ENCODE measurements at regions of chr6 and their contacts with region 1.

Region 1: GRCh38 chr6:144362042-144363018 is 77.2 kb downstream of the UTRN start:
- DNase-seq: peak in 1 of 3 donors; percentile 26
- H3K4me3 ChIP-seq: no peak overlapping the region
- H3K4me3 Mint-ChIP-seq: no peak overlapping the region
- H3K27ac ChIP-seq: peak overlapping the region; percentile 7 to 50
- H3K27ac Mint-ChIP-seq: peak overlapping the region; percentile 57 to 85 (median 70)
- H3K4me1 ChIP-seq: peaks cover 34 to 39% of the 10 kb centered on the region in 2 donors
- H3K4me1 Mint-ChIP-seq: peaks cover 65% of the 10 kb centered on the region
- H3K27me3 ChIP-seq: no peaks in the 10 kb centered on the region
- H3K27me3 Mint-ChIP-seq: no peaks in the 10 kb centered on the region
- CTCF ChIP-seq: no peak

Region 2: DNA sequence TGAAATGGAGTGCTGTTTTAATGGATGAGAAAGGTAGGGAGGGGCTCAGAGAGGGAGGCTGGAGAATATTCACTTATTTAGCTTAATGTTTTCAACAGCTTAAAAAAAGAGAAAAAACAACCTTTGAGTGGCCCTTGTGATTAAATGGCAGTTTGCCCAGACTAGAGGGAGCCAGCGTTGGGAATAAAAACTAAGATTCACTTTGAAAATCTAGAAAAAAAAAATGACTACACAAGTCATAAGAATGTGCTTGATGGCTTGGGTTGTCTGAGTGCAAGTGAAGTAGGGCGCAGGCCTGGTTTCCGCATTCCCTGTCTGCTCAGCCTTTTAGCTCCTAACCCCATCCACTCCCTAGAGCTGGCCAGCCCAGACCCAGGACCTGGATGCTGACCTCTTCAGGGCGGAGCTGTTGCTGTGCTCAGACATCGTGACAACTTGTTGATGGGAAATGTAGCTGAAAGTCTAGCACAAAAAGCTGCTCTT is 48.3 kb before region 1 on chr6:
- intact Hi-C with region 1: loop called in 1 of 2 experiments (anchors 10 kb)
- DNase-seq: no peak
- H3K4me3 ChIP-seq: no peak overlapping the region
- H3K4me3 Mint-ChIP-seq: no peak overlapping the region
- H3K27ac ChIP-seq: no peak overlapping the region
- H3K27ac Mint-ChIP-seq: no peak overlapping the region
- H3K4me1 ChIP-seq: peaks cover 4 to 21% of the 10 kb centered on the region in 2 donors
- H3K4me1 Mint-ChIP-seq: peaks cover 27% of the 10 kb centered on the region
- H3K27me3 ChIP-seq: no peaks in the 10 kb centered on the region
- H3K27me3 Mint-ChIP-seq: no peaks in the 10 kb centered on the region
- CTCF ChIP-seq: no peak

Region 3: DNA sequence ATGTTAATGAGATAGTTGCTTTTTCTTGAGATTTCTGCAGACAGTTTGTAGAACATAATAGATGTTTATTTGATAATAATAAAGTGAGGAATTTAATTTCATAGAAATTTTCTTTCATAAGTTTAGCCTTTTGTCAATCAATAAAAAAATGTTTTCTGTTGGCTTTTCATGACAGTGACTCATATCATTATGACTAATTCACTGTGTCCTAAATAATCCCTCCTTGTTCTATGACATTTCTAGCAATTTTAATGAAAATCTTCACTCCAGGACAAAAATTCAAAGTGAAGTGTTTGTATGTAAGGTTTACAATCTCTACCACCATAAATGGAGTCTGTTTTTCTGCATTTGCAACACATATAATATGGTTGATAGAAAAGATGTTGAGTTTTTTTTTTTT is 32.7 kb after region 1 on chr6:
- intact Hi-C with region 1: loop called in 1 of 2 experiments (anchors 5 kb)
- DNase-seq: peak in 2 of 3 donors; percentile 12 to 32
- H3K4me3 ChIP-seq: no peak overlapping the region
- H3K4me3 Mint-ChIP-seq: no peak overlapping the region
- H3K27ac ChIP-seq: peak overlapping the region in 1 of 2 donors; percentile 57
- H3K27ac Mint-ChIP-seq: peak overlapping the region in 4 of 7 donors; percentile 11 to 79 (median 60)
- H3K4me1 ChIP-seq: peaks cover 15 to 24% of the 10 kb centered on the region in 2 donors
- H3K4me1 Mint-ChIP-seq: peaks cover 29% of the 10 kb centered on the region
- H3K27me3 ChIP-seq: no peaks in the 10 kb centered on the region
- H3K27me3 Mint-ChIP-seq: no peaks in the 10 kb centered on the region
- CTCF ChIP-seq: no peak